Activated CD4-positive, alpha-beta memory T cell treated with anti-CD3 and anti-CD28 coated beads, Interleukin-2, amount 10 ng/mL, durations not matched to agents 7 days and 5 days (primary cell): ENCODE measurements at regions of chr1 and their contacts with region 1.

Region 1: DNA sequence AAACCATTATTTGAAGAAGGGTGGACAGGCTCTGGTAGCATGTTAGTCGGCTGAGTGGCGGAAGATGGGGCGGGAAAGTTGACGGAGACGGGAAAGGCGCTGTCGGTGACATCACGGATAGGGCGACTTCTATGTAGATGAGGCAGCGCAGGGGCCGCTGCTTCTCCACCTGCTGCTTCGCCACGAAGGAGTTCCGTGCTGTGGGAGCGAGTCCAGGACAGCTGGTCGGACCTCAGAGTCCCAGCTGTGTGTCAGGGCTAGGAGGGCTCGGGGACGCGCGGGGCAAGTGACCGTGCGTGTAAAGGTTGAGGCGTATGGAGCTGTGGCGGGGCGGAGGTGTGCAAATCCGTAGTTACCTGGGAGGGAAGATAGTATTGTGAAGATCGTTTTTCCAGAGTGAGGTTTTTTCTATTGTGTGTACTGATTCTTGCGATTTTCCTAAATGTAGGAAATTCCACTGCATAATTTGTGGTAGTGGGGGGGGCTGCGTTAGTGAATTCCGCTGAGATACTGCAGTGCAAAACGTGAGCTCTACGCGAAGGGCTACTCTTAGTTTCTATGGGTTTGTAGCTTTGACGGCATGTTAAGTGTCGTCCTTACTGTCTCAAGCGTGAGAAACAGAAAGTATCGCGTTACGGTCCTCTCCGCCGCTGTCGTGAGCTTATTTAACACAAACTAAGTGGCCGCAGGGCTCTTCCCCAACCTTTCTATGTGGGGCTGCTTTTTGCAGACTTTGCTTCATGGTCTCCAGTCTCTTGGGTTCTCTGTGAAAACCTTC is 111.2 kb upstream of the NBPF11 start:
- DNase-seq: peak; percentile 72
- H3K4me3 Mint-ChIP-seq: peak overlapping the region; percentile 84
- H3K27ac Mint-ChIP-seq: peak overlapping the region; percentile 83
- H3K4me1 Mint-ChIP-seq: peaks cover 16% of the 10 kb centered on the region
- H3K27me3 Mint-ChIP-seq: peaks cover 27% of the 10 kb centered on the region

Region 2: DNA sequence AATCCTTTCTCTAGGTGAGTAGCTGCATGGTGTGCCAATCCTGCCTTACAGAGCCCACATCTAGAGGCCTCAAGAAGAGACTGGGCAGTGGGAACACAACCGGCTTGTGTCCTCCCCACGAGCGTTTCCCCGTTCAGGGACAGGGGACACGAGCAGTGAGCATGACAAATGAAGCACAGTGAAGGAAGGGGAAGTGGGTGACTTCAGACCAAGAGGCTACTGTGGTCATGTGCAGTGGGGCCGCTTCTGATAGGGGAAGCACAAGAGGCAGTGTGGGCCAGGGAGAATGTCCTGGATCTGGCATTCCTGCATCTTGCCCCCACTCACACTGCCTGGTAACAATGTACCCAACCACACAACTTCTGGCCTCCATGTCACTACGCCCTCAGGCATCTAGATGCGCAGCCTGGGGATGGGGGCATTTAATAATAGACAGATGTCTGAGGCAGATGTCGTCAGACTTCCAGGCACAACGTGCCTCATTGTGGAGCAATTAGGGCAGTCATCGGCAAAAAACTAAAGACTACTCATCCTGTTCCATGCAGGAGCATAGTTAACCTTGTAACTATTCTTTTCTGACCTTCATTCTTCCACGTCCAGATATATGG is 44.4 kb after region 1 on chr1:
- CTCF ChIA-PET with region 1: no interaction called
- POLR2A ChIA-PET with region 1: interaction called, 16 read pairs
- DNase-seq: no peak
- H3K4me3 Mint-ChIP-seq: no peak overlapping the region
- H3K27ac Mint-ChIP-seq: no peak overlapping the region
- H3K4me1 Mint-ChIP-seq: peaks cover 28% of the 10 kb centered on the region
- H3K27me3 Mint-ChIP-seq: peaks cover 69% of the 10 kb centered on the region

Region 3: GRCh38 chr1:148318123-148318903 is 55.0 kb after region 1 on chr1:
- CTCF ChIA-PET with region 1: no interaction called
- POLR2A ChIA-PET with region 1: interaction called, 14 read pairs
- DNase-seq: peak; percentile 85
- H3K4me3 Mint-ChIP-seq: peak overlapping the region; percentile 75
- H3K27ac Mint-ChIP-seq: peak overlapping the region; percentile 58
- H3K4me1 Mint-ChIP-seq: peaks cover 36% of the 10 kb centered on the region
- H3K27me3 Mint-ChIP-seq: peaks cover 60% of the 10 kb centered on the region

Region 4: DNA sequence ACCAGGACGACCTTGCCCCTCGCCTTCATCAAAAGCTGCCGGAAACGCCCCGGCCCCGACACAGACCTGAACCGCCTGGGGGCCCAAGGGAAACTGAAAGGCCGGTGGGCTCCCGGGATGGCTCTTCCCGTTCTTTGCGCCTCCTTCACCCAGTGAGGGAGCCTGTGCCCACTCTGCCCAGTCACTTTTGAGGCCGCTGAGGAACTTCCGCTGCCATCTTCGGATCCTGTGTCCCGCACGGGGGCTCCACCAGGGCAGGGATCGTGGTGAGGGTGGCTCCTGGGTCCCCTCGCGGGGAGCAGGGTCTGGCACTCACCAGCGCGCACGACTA is 115.8 kb after region 1 on chr1:
- CTCF ChIA-PET with region 1: no interaction called
- POLR2A ChIA-PET with region 1: no interaction called
- DNase-seq: no peak
- H3K4me3 Mint-ChIP-seq: no peak overlapping the region
- H3K27ac Mint-ChIP-seq: no peak overlapping the region
- H3K4me1 Mint-ChIP-seq: peaks cover 5% of the 10 kb centered on the region
- H3K27me3 Mint-ChIP-seq: no peaks in the 10 kb centered on the region